ENCODE measurements at regions of chr2 and their contacts with region 1.

Region 1: DNA sequence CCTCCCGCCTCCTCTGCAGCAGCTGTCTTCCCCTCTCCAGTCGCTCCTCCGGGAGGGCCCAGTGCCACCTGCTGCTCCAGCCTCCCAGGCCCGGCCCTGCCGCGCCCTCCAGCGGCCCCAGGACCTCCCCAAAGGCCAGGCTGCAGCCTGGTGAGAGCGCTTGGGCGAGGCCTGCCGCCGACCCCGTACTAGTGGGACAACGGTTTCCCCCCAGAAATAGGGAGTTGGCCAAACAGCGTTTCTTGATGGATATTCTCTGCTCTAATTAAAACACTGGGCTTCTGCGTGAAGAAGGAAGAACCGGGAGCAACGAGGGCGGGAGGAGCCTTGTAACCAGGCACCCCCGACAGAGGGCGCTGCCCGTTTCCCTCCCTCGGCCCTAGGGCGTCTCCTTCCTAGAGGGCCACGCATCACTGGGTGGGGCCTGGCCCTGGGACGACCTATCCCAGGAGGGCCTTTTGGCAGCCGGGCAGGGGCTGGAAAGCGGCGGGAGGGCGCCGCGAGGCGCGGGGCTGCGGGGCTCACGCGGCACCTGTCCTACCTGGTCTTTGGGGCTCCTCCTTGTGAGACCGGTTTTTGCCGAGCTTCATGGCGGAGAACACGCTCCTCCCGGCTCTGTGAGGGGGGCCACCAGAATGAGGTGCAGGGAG is 25.4 kb upstream of the OTOF start:
- DNase-seq: peak; percentile 58 to 97
- H3K4me3 ChIP-seq: peak overlapping the region; percentile 30 to 65 (median 50)
- H3K27ac ChIP-seq: no peak overlapping the region
- H3K4me1 ChIP-seq: peaks cover 0 to 7% (median 6%) of the 10 kb centered on the region in 4 experiments; a peak in 4 of 7 replicates
- H3K27me3 ChIP-seq: peaks cover 0 to 18% (median 11%) of the 10 kb centered on the region in 4 experiments; a peak in 6 of 7 replicates
- CTCF ChIP-seq: peak; percentile 71 to 94 (median 85)
- EP300 ChIP-seq: no peak
- POLR2A ChIP-seq: peak in 1 of 2 experiments; percentile 58; a peak in 1 of 3 replicates
- RAD21 ChIP-seq: peak; percentile 60 to 64

Region 2: GRCh38 chr2:25797620-25798488 is 705.5 kb before region 1 on chr2:
- CTCF ChIA-PET with region 1: no interaction called
- POLR2A ChIA-PET with region 1: no interaction called
- DNase-seq: no peak
- H3K4me3 ChIP-seq: no peak overlapping the region
- H3K27ac ChIP-seq: no peak overlapping the region
- H3K4me1 ChIP-seq: no peaks in the 10 kb centered on the region
- H3K27me3 ChIP-seq: no peaks in the 10 kb centered on the region
- CTCF ChIP-seq: no peak
- EP300 ChIP-seq: no peak
- POLR2A ChIP-seq: no peak
- RAD21 ChIP-seq: no peak

Region 3: GRCh38 chr2:26330113-26330549 is 173.2 kb before region 1 on chr2:
- CTCF ChIA-PET with region 1: no interaction called
- POLR2A ChIA-PET with region 1: no interaction called
- DNase-seq: peak in 1 of 2 experiments; percentile 91
- H3K4me3 ChIP-seq: no peak overlapping the region
- H3K27ac ChIP-seq: no peak overlapping the region
- H3K4me1 ChIP-seq: no peaks in the 10 kb centered on the region
- H3K27me3 ChIP-seq: no peaks in the 10 kb centered on the region; a peak in 1 of 7 replicates
- CTCF ChIP-seq: peak; percentile 86 to 87 (median 86)
- EP300 ChIP-seq: no peak
- POLR2A ChIP-seq: no peak
- RAD21 ChIP-seq: peak; percentile 81 to 92

Region 4: DNA sequence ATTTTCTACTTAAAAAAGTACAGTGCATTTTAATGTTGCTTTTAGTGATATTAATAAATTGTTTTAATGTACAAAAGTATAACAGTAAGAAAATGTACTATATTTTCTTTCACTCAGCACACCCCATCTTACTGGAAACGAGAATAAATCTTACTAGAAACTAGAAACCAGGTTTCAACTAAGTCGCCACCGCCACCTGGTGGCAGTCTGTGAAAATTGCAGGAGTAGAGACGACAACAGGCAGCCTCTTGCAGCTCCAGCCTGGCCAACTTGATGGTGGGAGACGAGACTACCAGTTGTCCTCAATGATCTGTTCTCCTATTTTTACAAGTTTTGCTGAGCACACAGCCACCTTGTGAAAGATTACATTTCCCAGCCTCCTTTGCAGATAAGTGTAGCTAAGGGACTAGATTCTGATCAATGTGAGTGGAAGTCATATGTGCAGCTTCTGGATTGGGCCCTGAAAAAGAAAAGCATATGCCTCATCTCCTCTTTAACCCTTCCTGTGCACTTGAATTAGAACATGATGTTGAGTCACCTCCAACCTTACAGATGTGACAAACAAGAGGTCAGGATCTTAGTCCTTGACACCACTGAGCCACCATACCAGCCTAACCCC is 34.2 kb before region 1 on chr2:
- CTCF ChIA-PET with region 1: interaction called, 68 read pairs
- POLR2A ChIA-PET with region 1: no interaction called
- DNase-seq: peak; percentile 75 to 93
- H3K4me3 ChIP-seq: no peak overlapping the region
- H3K27ac ChIP-seq: no peak overlapping the region
- H3K4me1 ChIP-seq: peaks cover 0 to 3% (median 0%) of the 10 kb centered on the region in 4 experiments; a peak in 2 of 7 replicates
- H3K27me3 ChIP-seq: peaks cover 0 to 3% (median 0%) of the 10 kb centered on the region in 4 experiments; a peak in 1 of 7 replicates
- CTCF ChIP-seq: peak in 2 of 3 experiments; percentile 85 to 86; a peak in 3 of 4 replicates
- EP300 ChIP-seq: no peak
- POLR2A ChIP-seq: no peak
- RAD21 ChIP-seq: peak; percentile 90 to 94

Region 5: GRCh38 chr2:26477911-26478253 is 25.5 kb before region 1 on chr2 and contains the start of gene OTOF:
- CTCF ChIA-PET with region 1: interaction called, 68 read pairs
- POLR2A ChIA-PET with region 1: no interaction called
- DNase-seq: no peak
- H3K4me3 ChIP-seq: no peak within 1 kb of the TSS
- H3K27ac ChIP-seq: no peak within 1 kb of the TSS
- H3K4me1 ChIP-seq: peaks cover 0 to 7% (median under 1%) of the 10 kb centered on the region in 4 experiments; a peak in 4 of 7 replicates
- H3K27me3 ChIP-seq: no peaks in the 10 kb centered on the region
- CTCF ChIP-seq: no peak
- EP300 ChIP-seq: no peak
- POLR2A ChIP-seq: no peak
- RAD21 ChIP-seq: no peak
- total RNA-seq, gene OTOF: not detected in 2 replicates

Region 6: DNA sequence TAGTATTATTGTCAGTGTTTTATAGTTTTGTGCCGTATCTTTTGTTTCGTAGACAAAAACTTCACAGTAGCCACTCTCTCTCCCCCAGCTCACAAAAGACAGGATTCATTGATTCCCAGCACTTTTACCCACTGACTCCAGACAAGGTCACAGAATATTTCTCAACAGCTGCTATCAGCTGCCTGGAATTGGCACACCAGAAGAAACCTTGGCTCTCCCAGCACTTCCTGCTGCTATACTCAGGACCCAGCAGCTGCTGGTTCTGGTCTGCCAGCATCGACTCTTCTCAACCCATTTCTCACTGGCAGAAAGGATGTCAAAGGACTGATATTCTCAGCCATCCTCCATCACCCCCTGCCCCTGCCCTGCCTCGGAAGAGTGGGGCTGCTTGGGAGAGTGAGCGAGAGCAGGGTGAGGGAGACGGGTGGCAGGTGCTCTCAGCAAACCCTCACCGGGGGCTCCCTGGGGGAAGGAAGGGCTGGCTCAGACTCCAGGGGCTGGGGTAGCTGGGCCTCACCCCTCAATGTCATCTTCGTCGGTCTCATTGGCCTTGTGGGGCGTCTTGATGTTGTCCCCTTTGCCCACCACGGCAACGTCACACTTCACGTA is 19.3 kb before region 1 on chr2:
- CTCF ChIA-PET with region 1: interaction called, 24 read pairs
- POLR2A ChIA-PET with region 1: no interaction called
- DNase-seq: no peak
- H3K4me3 ChIP-seq: no peak overlapping the region
- H3K27ac ChIP-seq: no peak overlapping the region
- H3K4me1 ChIP-seq: no peaks in the 10 kb centered on the region; a peak in 1 of 7 replicates
- H3K27me3 ChIP-seq: no peaks in the 10 kb centered on the region
- CTCF ChIP-seq: no peak
- EP300 ChIP-seq: no peak
- POLR2A ChIP-seq: no peak
- RAD21 ChIP-seq: no peak

Region 7: DNA sequence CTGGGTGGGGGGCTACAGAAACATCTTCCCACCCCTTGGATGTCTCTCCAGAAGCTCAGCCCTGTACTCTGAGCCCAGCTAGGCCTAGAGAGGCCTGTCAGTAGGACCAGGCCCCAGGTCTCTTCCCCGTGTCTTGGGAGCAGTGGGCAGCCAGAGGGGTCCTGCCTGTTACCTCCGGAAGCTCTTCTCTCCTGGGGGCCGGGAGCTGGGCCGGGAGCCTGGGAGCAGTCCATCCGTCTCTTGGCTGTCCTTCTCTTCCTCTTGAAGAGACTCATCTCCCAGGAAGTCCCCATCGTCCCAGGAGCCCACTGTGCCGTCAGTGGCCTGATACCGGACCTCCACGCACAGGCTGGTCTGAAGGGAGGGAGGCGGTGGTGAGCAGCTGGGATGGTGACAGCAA is 12.9 kb after region 1 on chr2:
- CTCF ChIA-PET with region 1: interaction called, 51 read pairs
- POLR2A ChIA-PET with region 1: interaction called, 4 read pairs
- DNase-seq: no peak
- H3K4me3 ChIP-seq: no peak overlapping the region
- H3K27ac ChIP-seq: no peak overlapping the region
- H3K4me1 ChIP-seq: no peaks in the 10 kb centered on the region
- H3K27me3 ChIP-seq: no peaks in the 10 kb centered on the region
- CTCF ChIP-seq: no peak
- EP300 ChIP-seq: no peak
- POLR2A ChIP-seq: no peak
- RAD21 ChIP-seq: no peak

Region 8: DNA sequence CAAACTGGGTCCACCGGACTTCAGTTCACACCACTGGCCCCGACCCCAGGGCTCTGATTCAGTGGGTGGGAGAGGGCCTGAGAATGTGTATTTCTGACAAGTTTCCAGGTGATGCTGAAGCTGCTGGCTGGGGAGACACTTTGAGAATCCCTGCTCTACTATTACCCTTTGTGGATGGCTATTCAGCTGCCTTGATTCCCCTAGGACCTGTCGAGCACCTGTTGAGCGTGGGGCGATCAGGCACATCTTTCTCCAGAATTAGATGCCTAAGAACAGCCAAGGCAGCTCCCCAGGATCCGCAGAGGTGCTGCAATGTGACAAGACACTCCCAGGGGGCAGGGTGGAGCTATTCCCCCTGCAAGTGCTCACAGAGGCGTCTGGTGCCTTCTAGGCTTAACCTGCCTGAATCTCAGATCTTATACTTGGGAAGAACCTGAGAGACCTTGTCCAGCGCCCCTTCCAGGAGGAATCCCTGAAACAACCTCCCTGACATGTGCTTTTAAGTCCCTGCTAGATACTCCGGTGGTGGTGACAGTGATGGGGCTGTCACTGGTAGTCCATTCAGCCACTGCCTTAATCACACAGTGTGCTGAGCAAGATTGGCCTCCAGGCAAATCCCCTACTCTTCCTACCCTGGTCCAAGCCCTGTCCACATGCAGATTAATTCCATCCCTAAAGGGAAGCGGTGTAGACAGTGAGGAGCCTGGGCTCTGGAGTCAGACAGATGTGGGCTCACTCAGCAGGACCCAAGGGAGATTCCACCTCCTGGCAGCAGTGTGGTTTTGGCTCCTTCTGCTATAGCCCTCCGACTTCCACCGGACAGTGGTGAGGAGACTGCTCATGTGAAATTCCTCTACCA is 17.9 kb after region 1 on chr2:
- CTCF ChIA-PET with region 1: interaction called, 51 read pairs
- POLR2A ChIA-PET with region 1: interaction called, 3 read pairs
- DNase-seq: peak; percentile 29 to 66
- H3K4me3 ChIP-seq: no peak overlapping the region
- H3K27ac ChIP-seq: no peak overlapping the region
- H3K4me1 ChIP-seq: no peaks in the 10 kb centered on the region
- H3K27me3 ChIP-seq: no peaks in the 10 kb centered on the region
- CTCF ChIP-seq: peak; percentile 78 to 81 (median 81)
- EP300 ChIP-seq: no peak
- POLR2A ChIP-seq: no peak
- RAD21 ChIP-seq: peak; percentile 70 to 78

Measured in H1 (cell line).